Activated CD8-positive, alpha-beta T cell treated with anti-CD3 and anti-CD28 coated beads, Interleukin-2, amount 10 ng/mL, durations not matched to agents 7 days and 5 days (primary cell): ENCODE measurements at regions of chr1 and their contacts with region 1.

Region 1: DNA sequence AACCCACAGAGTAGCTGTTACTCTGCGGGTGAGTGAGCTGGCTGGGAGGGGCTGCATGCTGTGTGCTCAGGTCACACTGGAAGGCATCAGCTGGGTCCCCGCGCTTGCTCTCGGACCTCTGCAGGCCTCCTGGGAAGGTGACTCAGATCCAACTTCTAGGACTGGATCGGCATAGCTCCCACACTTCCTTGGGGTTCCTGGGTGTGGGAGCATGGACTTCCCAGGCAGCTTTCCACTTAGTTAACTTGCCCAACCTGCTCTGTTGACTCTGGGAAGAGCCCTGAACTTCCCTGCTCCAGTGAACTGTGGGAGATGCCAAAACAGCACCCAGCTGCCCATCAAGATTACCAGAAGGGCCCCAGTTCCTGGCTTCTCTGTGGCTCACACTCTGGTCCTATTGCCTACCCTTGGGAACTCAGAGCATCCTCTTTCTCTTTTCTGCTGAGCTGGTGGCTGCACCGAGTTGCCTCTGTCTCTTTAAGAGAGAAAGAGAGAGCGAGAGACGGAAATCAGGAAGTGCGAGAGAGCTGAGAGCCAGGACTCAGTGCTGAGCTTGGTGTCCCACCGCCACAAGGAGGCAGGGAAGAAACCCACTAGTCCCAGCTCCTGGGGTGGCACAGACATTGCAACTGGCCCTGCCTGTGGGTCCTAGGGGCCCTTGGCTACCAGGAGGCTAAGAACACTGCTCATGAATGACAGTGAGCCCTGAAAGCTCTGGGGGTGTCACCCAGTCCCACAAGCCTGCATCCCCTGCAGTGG is at the start of gene IKBKE:
- DNase-seq: peak; percentile 73
- ATAC-seq: peak; percentile 71
- H3K4me3 Mint-ChIP-seq: peak within 1 kb of the TSS; percentile 89
- H3K27ac Mint-ChIP-seq: peak within 1 kb of the TSS; percentile 94
- H3K4me1 Mint-ChIP-seq: peaks cover 88% of the 10 kb centered on the region
- H3K27me3 Mint-ChIP-seq: no peaks in the 10 kb centered on the region
- total RNA-seq, gene IKBKE: 68.3 to 70.1 TPM

Region 2: GRCh38 chr1:206489980-206490770 is 20.1 kb after region 1 on chr1:
- CTCF ChIA-PET with region 1: interaction called, 15 read pairs
- POLR2A ChIA-PET with region 1: interaction called, 3 read pairs
- DNase-seq: peak; percentile 78
- ATAC-seq: peak; percentile 84
- H3K4me3 Mint-ChIP-seq: no peak overlapping the region
- H3K27ac Mint-ChIP-seq: peak overlapping the region; percentile 68
- H3K4me1 Mint-ChIP-seq: peaks cover 21% of the 10 kb centered on the region
- H3K27me3 Mint-ChIP-seq: no peaks in the 10 kb centered on the region

Region 3: GRCh38 chr1:206556750-206557635 is 86.9 kb after region 1 on chr1:
- CTCF ChIA-PET with region 1: interaction called, 6 read pairs
- POLR2A ChIA-PET with region 1: interaction called, 10 read pairs
- DNase-seq: peak; percentile 95
- ATAC-seq: peak; percentile 71
- H3K4me3 Mint-ChIP-seq: peak overlapping the region; percentile 86
- H3K27ac Mint-ChIP-seq: peak overlapping the region; percentile 82
- H3K4me1 Mint-ChIP-seq: peaks cover 67% of the 10 kb centered on the region
- H3K27me3 Mint-ChIP-seq: no peaks in the 10 kb centered on the region

Region 4: GRCh38 chr1:206635080-206635977 is 165.2 kb after region 1 on chr1 and contains the start of gene DYRK3:
- CTCF ChIA-PET with region 1: interaction called, 10 read pairs
- POLR2A ChIA-PET with region 1: interaction called, 3 read pairs
- DNase-seq: peak; percentile 95
- ATAC-seq: peak; percentile 95
- H3K4me3 Mint-ChIP-seq: peak within 1 kb of the TSS; percentile 80
- H3K27ac Mint-ChIP-seq: peak within 1 kb of the TSS; percentile 83
- H3K4me1 Mint-ChIP-seq: peaks cover 27% of the 10 kb centered on the region
- H3K27me3 Mint-ChIP-seq: peaks cover 17% of the 10 kb centered on the region
- total RNA-seq, gene DYRK3: 5.3 to 5.9 TPM